CD14-positive monocyte (primary cell): ENCODE measurements at regions of chr5 and their contacts with region 1.

Region 1: DNA sequence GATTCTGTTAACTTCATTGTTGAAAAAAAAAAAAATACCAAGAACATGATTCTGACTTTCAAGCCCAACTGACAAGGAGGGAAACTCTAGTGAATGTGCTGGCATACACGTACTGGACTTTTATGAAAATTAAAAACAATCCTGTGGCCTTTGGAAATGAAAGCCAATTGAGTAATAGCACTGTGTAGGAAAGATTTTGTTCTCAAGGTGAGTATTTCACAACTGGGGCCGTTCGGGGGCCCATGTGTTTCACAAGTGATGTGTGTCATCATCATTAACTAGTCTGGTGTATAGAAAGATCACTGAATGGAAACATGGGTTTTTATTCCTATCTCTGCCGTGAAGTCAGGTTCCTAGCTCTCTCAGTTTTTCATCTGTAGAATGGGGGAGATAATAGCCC is 605.0 kb upstream of the CLINT1 start:
- DNase-seq: peak; percentile 23 to 76 (median 65)
- H3K4me3 ChIP-seq: peak overlapping the region in 1 of 3 experiments; percentile 26
- H3K4me3 Mint-ChIP-seq: peak overlapping the region in 1 of 2 donors; percentile 30
- H3K27ac ChIP-seq: no peak overlapping the region
- H3K27ac Mint-ChIP-seq: peak overlapping the region in 6 of 7 donors; percentile 84 to 93 (median 86)
- H3K4me1 ChIP-seq: peaks cover 36 to 39% of the 10 kb centered on the region in 2 donors
- H3K4me1 Mint-ChIP-seq: peaks cover 44% of the 10 kb centered on the region
- H3K27me3 ChIP-seq: no peaks in the 10 kb centered on the region
- H3K27me3 Mint-ChIP-seq: peaks cover 0 to 3% (median 1%) of the 10 kb centered on the region in 3 donors
- CTCF ChIP-seq: no peak

Region 2: GRCh38 chr5:158142156-158142555 is 321.8 kb before region 1 on chr5:
- intact Hi-C with region 1: no loop called
- DNase-seq: no peak
- H3K4me3 ChIP-seq: no peak overlapping the region
- H3K4me3 Mint-ChIP-seq: no peak overlapping the region
- H3K27ac ChIP-seq: no peak overlapping the region
- H3K27ac Mint-ChIP-seq: no peak overlapping the region
- H3K4me1 ChIP-seq: no peaks in the 10 kb centered on the region
- H3K4me1 Mint-ChIP-seq: no peaks in the 10 kb centered on the region
- H3K27me3 ChIP-seq: no peaks in the 10 kb centered on the region
- H3K27me3 Mint-ChIP-seq: peaks cover 0 to 4% (median 3%) of the 10 kb centered on the region in 3 donors
- CTCF ChIP-seq: no peak

Region 3: DNA sequence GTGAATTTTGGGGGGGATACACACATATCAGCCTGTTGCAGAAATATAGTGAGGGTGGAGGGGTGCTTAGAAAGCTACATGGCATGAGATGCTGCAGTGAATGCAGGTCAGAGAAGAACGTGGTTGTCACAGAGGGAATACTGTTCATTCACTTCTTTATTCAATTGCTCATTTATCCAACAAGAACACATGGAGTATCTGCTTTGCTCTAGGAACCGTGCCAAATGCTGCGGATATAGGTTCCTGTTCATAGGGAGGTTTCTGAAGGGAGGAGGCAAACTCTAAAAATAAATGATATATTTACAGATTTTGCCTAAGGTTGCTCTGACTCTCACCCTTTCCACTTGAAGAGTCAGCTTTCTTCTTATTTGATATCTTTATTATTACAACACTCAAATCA is 160.7 kb before region 1 on chr5:
- intact Hi-C with region 1: no loop called
- DNase-seq: no peak
- H3K4me3 ChIP-seq: no peak overlapping the region
- H3K4me3 Mint-ChIP-seq: no peak overlapping the region
- H3K27ac ChIP-seq: no peak overlapping the region
- H3K27ac Mint-ChIP-seq: no peak overlapping the region
- H3K4me1 ChIP-seq: no peaks in the 10 kb centered on the region
- H3K4me1 Mint-ChIP-seq: no peaks in the 10 kb centered on the region
- H3K27me3 ChIP-seq: no peaks in the 10 kb centered on the region
- H3K27me3 Mint-ChIP-seq: peaks cover 1 to 6% (median 3%) of the 10 kb centered on the region in 3 donors
- CTCF ChIP-seq: no peak

Region 4: DNA sequence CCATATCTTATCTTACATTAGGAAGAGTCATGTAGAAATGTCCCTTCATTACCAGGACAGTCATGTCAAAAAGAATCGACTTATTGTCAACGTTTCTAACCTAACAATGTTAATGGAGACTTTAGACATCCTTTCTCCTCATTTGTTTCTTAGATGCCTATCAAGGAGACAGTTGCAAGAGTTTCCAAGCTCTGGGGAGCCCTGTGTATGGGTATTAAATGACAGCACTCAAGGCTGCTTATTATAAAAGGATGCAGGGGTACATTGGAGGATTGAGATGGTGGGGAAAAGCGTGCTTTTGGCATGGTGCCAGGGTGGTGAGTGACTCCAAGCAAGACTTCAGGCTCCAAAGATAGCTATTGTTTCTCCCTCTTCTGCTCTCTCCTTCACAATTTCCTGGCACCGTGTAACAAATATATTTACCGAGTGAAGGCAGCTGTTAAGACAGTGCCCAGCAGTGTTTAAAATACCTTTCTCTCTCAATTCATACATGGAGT is 143.7 kb before region 1 on chr5:
- intact Hi-C with region 1: no loop called
- DNase-seq: no peak
- H3K4me3 ChIP-seq: no peak overlapping the region
- H3K4me3 Mint-ChIP-seq: no peak overlapping the region
- H3K27ac ChIP-seq: no peak overlapping the region
- H3K27ac Mint-ChIP-seq: no peak overlapping the region
- H3K4me1 ChIP-seq: no peaks in the 10 kb centered on the region
- H3K4me1 Mint-ChIP-seq: peaks cover 6% of the 10 kb centered on the region
- H3K27me3 ChIP-seq: no peaks in the 10 kb centered on the region
- H3K27me3 Mint-ChIP-seq: peaks cover 1 to 2% (median 2%) of the 10 kb centered on the region in 3 donors
- CTCF ChIP-seq: no peak

Region 5: GRCh38 chr5:158390577-158390976 is 73.4 kb before region 1 on chr5:
- intact Hi-C with region 1: loop called in 1 of 2 experiments (anchors 10 kb)
- DNase-seq: peak; percentile 59 to 92 (median 75)
- H3K4me3 ChIP-seq: no peak overlapping the region
- H3K4me3 Mint-ChIP-seq: no peak overlapping the region
- H3K27ac ChIP-seq: no peak overlapping the region
- H3K27ac Mint-ChIP-seq: peak overlapping the region in 3 of 7 donors; percentile 5 to 35 (median 21)
- H3K4me1 ChIP-seq: peaks cover 11% of the 10 kb centered on the region in 2 donors
- H3K4me1 Mint-ChIP-seq: peaks cover 12% of the 10 kb centered on the region
- H3K27me3 ChIP-seq: no peaks in the 10 kb centered on the region
- H3K27me3 Mint-ChIP-seq: peaks cover 0 to 2% (median 0%) of the 10 kb centered on the region in 3 donors
- CTCF ChIP-seq: no peak

Region 6: GRCh38 chr5:158634714-158635113 is 170.8 kb after region 1 on chr5:
- intact Hi-C with region 1: no loop called
- DNase-seq: no peak
- H3K4me3 ChIP-seq: no peak overlapping the region
- H3K4me3 Mint-ChIP-seq: no peak overlapping the region
- H3K27ac ChIP-seq: no peak overlapping the region
- H3K27ac Mint-ChIP-seq: no peak overlapping the region
- H3K4me1 ChIP-seq: no peaks in the 10 kb centered on the region
- H3K4me1 Mint-ChIP-seq: no peaks in the 10 kb centered on the region
- H3K27me3 ChIP-seq: no peaks in the 10 kb centered on the region
- H3K27me3 Mint-ChIP-seq: peaks cover 0 to 1% (median 0%) of the 10 kb centered on the region in 3 donors
- CTCF ChIP-seq: no peak